ENCODE measurements at regions of chrX and their contacts with region 1.

Region 1: DNA sequence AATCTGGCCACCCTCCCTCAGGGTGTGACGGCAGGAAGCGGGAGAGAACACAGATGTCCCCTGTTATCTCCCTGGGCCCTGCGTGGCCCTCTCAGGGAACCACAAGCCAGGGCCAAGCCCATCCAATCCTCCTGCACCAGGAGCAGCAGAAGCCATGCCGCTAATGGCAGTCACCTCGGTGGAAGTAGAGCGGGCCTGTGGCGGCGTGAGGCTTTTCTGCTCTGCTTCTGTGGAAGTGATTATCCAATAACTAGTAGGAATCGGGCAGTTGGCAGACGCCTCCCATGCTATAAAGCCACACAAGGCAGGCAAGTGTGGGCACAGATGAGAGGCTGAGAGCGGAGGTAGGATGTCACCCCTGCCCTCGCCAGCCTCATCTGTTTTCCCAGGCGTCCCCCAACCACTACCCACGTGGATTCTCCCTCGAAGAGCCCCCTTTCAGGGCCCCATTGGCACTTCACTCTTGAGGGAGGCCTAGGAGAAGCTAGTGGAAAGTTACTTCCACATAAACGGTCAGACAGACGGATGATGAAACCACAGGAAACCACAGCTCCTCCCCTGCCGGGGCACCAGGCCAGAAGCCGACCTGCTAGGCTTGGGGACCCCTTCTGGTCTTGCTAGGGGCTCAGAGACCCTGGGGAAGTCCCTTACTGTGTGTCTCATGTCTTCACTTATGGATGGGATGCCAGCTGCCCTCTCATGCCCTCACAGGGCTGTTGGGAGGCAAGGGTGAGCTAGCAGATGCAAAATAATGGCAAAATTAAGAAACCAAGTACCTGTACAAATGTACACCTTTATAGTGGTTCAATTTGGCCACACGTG is 18.8 kb upstream of the TMSB4X start:
- DNase-seq: peak; percentile 83
- H3K4me3 Mint-ChIP-seq: peak overlapping the region; percentile 85
- H3K27ac Mint-ChIP-seq: peak overlapping the region; percentile 99
- H3K4me1 Mint-ChIP-seq: peaks cover 64% of the 10 kb centered on the region
- H3K27me3 Mint-ChIP-seq: no peaks in the 10 kb centered on the region

Region 2: GRCh38 chrX:12929701-12930100 is 26.4 kb before region 1 on chrX:
- CTCF ChIA-PET with region 1: no interaction called
- POLR2A ChIA-PET with region 1: no interaction called
- intact Hi-C with region 1: no loop called
- DNase-seq: no peak
- H3K4me3 Mint-ChIP-seq: no peak overlapping the region
- H3K27ac Mint-ChIP-seq: no peak overlapping the region
- H3K4me1 Mint-ChIP-seq: no peaks in the 10 kb centered on the region
- H3K27me3 Mint-ChIP-seq: peaks cover 2% of the 10 kb centered on the region

Region 3: GRCh38 chrX:12967711-12968465 is 11.8 kb after region 1 on chrX:
- CTCF ChIA-PET with region 1: interaction called, 26 read pairs
- POLR2A ChIA-PET with region 1: interaction called, 426 read pairs
- intact Hi-C with region 1: loop called (anchors 1 kb)
- DNase-seq: peak; percentile 56
- H3K4me3 Mint-ChIP-seq: peak overlapping the region; percentile 82
- H3K27ac Mint-ChIP-seq: peak overlapping the region; percentile 96
- H3K4me1 Mint-ChIP-seq: peaks cover 41% of the 10 kb centered on the region
- H3K27me3 Mint-ChIP-seq: no peaks in the 10 kb centered on the region